Natural killer cell (primary cell): ENCODE measurements at regions of chr18 and their contacts with region 1.

Region 1: DNA sequence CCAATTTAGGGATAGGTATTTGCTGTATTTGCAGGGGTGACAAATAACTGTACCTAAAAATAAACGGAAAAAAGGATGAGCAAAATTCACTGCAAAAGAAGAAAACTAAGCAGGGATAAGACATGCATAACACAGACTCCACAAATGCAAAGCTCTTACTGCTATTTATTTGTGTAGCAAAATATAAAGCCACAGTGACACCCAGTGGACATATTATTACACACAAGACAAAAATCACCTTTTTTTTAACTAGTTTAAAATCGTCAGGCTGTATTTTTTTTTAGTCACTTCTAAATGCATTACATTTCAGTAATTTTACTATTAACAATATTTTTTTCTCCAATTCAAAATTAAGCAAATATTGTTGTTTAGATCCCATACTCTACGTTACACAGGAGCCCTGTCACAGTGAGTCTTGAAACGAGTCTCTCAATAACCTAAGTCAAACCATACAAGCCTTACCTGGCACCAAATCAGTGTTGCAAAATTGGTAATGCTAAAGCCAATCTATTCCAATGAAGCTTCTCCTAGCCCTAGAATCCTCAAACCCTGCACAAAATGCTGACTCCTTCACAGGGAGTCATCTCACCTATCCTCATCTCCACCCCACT is 23.7 kb downstream of the METTL4 start:
- DNase-seq: peak in 1 of 2 donors; percentile 67
- ATAC-seq: peak; percentile 62 to 65 (median 64)
- H3K4me3 ChIP-seq: no peak overlapping the region
- H3K4me3 Mint-ChIP-seq: no peak overlapping the region
- H3K27ac ChIP-seq: no peak overlapping the region
- H3K27ac Mint-ChIP-seq: no peak overlapping the region
- H3K4me1 ChIP-seq: no peaks in the 10 kb centered on the region
- H3K4me1 Mint-ChIP-seq: no peaks in the 10 kb centered on the region
- H3K27me3 ChIP-seq: no peaks in the 10 kb centered on the region
- H3K27me3 Mint-ChIP-seq: no peaks in the 10 kb centered on the region
- CTCF ChIP-seq: peak; percentile 78

Region 2: DNA sequence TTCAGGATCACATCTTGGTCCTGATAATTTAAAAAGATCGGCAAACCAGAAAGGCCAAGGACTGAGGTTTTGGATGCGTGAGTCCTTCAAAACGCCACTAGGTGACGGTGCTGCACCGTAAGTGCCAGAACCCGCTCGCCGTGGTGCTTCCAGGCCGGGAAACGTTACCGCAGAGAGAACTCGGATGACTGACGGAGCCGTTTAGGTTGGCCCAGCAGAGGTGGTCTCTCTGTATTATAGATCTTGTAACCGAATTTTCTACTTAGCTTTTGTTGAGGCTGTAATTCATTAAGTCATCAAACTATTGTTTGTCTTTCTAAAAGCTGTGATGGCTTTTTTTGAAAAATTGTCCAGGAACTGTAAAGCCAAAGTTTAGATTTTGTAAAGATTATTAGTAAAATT is 1682.7 kb before region 1 on chr18:
- intact Hi-C with region 1: loop called (anchors 2 kb)
- DNase-seq: peak; percentile 44 to 81
- ATAC-seq: peak; percentile 74 to 92 (median 90)
- H3K4me3 ChIP-seq: no peak overlapping the region
- H3K4me3 Mint-ChIP-seq: no peak overlapping the region
- H3K27ac ChIP-seq: no peak overlapping the region
- H3K27ac Mint-ChIP-seq: no peak overlapping the region
- H3K4me1 ChIP-seq: no peaks in the 10 kb centered on the region
- H3K4me1 Mint-ChIP-seq: no peaks in the 10 kb centered on the region
- H3K27me3 ChIP-seq: no peaks in the 10 kb centered on the region
- H3K27me3 Mint-ChIP-seq: peaks cover 8 to 27% of the 10 kb centered on the region in 2 donors
- CTCF ChIP-seq: peak; percentile 97

Region 3: GRCh38 chr18:1585879-1586488 is 961.6 kb before region 1 on chr18:
- intact Hi-C with region 1: loop called (anchors 2 kb)
- DNase-seq: peak in 1 of 2 donors; percentile 32
- ATAC-seq: peak in 1 of 3 donors; percentile 43
- H3K4me3 ChIP-seq: no peak overlapping the region
- H3K4me3 Mint-ChIP-seq: no peak overlapping the region
- H3K27ac ChIP-seq: no peak overlapping the region
- H3K27ac Mint-ChIP-seq: no peak overlapping the region
- H3K4me1 ChIP-seq: no peaks in the 10 kb centered on the region
- H3K4me1 Mint-ChIP-seq: no peaks in the 10 kb centered on the region
- H3K27me3 ChIP-seq: no peaks in the 10 kb centered on the region
- H3K27me3 Mint-ChIP-seq: no peaks in the 10 kb centered on the region
- CTCF ChIP-seq: peak; percentile 26